Activated naive CD4-positive, alpha-beta T cell treated with anti-CD3 and anti-CD28 coated beads for 36 hours (primary cell): ENCODE measurements at regions of chr15 and their contacts with region 1.

Region 1: GRCh38 chr15:67175643-67176071 is 78.8 kb downstream of the AAGAB start:
- DNase-seq: peak; percentile 89
- H3K4me3 Mint-ChIP-seq: peak overlapping the region; percentile 9
- H3K27ac Mint-ChIP-seq: peak overlapping the region; percentile 91
- H3K4me1 Mint-ChIP-seq: peaks cover 56% of the 10 kb centered on the region
- H3K27me3 Mint-ChIP-seq: no peaks in the 10 kb centered on the region

Region 2: DNA sequence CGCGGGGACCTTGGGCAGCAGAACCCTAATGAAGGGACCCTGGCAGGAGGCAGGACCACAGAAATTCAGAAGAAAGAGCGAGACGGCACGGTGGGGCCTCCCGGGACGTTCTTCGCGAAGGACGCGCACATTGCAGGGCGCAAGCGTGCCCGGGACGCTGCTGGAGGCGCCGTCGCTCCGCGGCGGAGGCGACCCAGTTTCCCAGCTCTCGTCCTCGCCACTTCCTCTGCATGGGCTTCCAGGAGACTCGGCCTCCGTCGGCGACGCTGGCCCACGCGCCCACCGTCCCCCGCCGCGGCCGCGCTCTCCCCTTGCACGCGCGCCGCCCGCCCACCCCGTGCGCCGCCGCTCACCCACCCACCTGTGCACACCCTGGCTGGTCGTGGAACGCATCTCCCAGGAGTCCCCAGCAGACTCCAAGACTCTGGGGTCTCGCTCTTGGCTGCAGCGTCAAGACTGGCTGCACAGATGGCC is 142.0 kb before region 1 on chr15:
- CTCF ChIA-PET with region 1: no interaction called
- intact Hi-C with region 1: loop called (anchors 1 kb)
- DNase-seq: peak; percentile 40
- H3K4me3 Mint-ChIP-seq: peak overlapping the region; percentile 65
- H3K27ac Mint-ChIP-seq: no peak overlapping the region
- H3K4me1 Mint-ChIP-seq: peaks cover 17% of the 10 kb centered on the region
- H3K27me3 Mint-ChIP-seq: no peaks in the 10 kb centered on the region

Region 3: DNA sequence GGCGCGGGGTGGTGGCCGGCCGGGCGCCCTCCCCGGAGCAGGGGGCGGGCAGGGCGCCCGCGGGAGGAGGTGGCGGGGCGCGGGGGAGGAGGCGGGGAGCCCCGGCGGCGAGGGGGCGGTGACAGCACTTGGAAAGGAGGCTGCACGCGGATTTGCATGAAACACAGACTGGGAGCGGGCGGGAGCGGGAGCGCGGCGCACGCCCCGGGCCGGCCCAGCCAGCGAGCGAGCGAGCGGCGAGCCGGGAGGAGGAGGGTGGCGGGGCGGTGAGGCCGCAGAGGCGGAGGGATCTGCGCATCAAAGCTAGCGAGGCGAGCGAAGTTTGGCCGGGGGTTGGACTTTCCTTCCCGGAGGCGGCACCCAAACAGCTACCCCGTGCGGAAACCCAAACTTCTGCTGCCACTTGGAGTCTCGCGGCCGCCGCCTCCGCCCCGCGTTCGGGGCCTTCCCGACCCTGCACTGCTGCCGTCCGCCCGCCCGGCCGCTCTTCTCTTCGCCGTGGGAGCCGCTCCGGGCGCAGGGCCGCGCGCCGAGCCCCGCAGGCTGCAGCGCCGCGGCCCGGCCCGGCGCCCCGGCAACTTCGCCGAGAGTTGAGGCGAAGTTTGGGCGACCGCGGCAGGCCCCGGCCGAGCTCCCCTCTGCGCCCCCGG is 110.1 kb before region 1 on chr15 and contains the start of gene SMAD3:
- CTCF ChIA-PET with region 1: interaction called, 8 read pairs
- intact Hi-C with region 1: loop called (anchors 1 kb)
- DNase-seq: peak; percentile 80
- H3K4me3 Mint-ChIP-seq: peak within 1 kb of the TSS; percentile 95
- H3K27ac Mint-ChIP-seq: peak within 1 kb of the TSS; percentile 89
- H3K4me1 Mint-ChIP-seq: peaks cover 50% of the 10 kb centered on the region
- H3K27me3 Mint-ChIP-seq: peaks cover 17% of the 10 kb centered on the region
- total RNA-seq, gene SMAD3: 35.1 to 39.2 TPM

Region 4: GRCh38 chr15:67085818-67086636 is 89.6 kb before region 1 on chr15:
- CTCF ChIA-PET with region 1: no interaction called
- intact Hi-C with region 1: loop called (anchors 1 kb)
- DNase-seq: peak; percentile 44
- H3K4me3 Mint-ChIP-seq: no peak overlapping the region
- H3K27ac Mint-ChIP-seq: peak overlapping the region; percentile 78
- H3K4me1 Mint-ChIP-seq: peaks cover 88% of the 10 kb centered on the region
- H3K27me3 Mint-ChIP-seq: no peaks in the 10 kb centered on the region

Region 5: DNA sequence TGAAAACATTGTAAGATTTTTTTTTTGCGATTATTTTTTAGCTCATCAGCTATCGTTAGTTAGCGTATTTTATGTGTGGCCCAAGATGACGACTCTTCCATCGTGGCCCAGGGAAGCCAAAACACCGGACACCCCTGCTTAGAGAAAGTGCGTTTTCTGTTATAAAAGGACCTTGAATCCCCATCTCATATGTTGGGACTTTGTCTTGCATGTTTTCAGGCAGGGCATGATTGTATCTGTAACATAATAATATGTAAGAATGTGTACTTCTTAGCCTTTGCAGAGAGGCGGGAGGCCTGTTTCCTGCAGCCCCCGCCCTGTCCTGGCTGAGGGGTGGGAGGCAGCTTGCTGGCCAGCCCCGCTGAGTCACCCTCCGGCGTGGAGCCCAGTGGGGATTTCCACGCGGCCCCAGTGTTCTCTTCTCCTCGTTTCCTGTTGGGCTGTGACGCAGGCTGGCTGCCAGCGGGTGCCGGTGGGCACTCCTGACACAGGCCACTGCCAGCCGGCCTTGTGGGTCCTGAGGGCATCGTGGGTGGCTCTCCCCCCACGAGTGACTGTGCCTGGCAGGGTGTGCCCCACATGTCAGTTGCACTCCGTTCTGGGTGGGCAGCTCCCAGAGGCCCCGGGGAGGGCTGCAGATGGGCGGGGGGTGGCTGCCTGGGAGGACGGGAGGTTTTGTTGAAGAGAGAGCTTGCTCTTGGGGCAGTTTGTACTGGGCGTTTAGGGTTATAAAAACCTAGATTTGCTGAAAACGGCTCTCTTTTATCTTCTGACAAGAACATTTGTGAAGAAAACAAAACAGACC is 54.6 kb before region 1 on chr15:
- CTCF ChIA-PET with region 1: no interaction called
- intact Hi-C with region 1: loop called (anchors 2 kb)
- DNase-seq: peak; percentile 94
- H3K4me3 Mint-ChIP-seq: peak overlapping the region; percentile 70
- H3K27ac Mint-ChIP-seq: peak overlapping the region; percentile 95
- H3K4me1 Mint-ChIP-seq: peaks cover 80% of the 10 kb centered on the region
- H3K27me3 Mint-ChIP-seq: no peaks in the 10 kb centered on the region

Region 6: DNA sequence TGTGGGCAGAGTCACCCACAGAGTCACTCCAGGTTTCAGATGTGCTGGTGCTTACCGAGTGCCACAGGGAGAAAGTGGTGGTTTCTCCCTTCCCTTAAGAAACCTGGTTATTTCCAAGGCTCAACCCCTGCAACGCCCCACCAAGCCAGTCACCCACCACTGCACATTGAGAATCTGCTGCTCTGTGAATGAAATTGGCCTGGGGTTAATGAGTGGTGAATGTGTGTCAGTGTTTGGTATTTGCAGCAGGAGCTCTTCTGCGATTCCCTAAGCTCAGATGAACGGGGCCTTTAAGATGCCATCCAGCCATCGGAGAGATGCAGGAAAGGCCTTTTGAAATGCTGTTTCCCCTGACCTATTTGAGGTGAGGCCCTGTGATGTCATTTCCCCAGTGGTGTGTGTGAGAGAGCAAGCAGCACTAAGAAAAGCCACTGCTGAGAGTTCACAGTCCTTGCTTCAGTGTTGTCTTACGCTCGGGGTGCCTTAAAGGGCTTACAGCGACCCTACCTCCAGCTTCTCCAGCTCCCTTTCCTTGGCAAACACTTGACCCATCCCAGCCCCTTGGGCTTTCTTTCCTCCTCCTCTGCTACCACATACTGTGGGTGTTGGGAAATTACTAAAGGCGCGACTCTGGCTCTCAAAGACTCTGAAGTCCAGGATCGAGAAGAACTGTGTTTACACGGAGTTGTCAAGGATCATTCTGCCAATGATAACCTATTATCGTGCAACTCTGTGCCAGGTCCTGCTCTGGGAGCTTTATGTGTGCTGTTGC is 41.4 kb before region 1 on chr15:
- CTCF ChIA-PET with region 1: no interaction called
- intact Hi-C with region 1: loop called (anchors 1 kb)
- DNase-seq: peak; percentile 84
- H3K4me3 Mint-ChIP-seq: peak overlapping the region; percentile 79
- H3K27ac Mint-ChIP-seq: peak overlapping the region; percentile 93
- H3K4me1 Mint-ChIP-seq: peaks cover 85% of the 10 kb centered on the region
- H3K27me3 Mint-ChIP-seq: no peaks in the 10 kb centered on the region

Region 7: GRCh38 chr15:67150028-67150860 is 25.4 kb before region 1 on chr15:
- CTCF ChIA-PET with region 1: no interaction called
- intact Hi-C with region 1: loop called (anchors 1 kb)
- DNase-seq: peak; percentile 72
- H3K4me3 Mint-ChIP-seq: peak overlapping the region; percentile 59
- H3K27ac Mint-ChIP-seq: peak overlapping the region; percentile 91
- H3K4me1 Mint-ChIP-seq: peaks cover 67% of the 10 kb centered on the region
- H3K27me3 Mint-ChIP-seq: no peaks in the 10 kb centered on the region